Endothelial cell of umbilical vein (primary cell): ENCODE measurements at regions of chr1 and their contacts with region 1.

Region 1: GRCh38 chr1:67430352-67431155 is at the start of gene SERBP1:
- DNase-seq: peak; percentile 99
- H3K4me3 ChIP-seq: peak within 1 kb of the TSS; percentile 92 to 99 (median 93)
- H3K27ac ChIP-seq: peak within 1 kb of the TSS; percentile 75
- H3K4me1 ChIP-seq: peaks cover 27% of the 10 kb centered on the region
- H3K27me3 ChIP-seq: no peaks in the 10 kb centered on the region
- CTCF ChIP-seq: no peak
- POLR2A ChIP-seq: peak; percentile 16
- total RNA-seq, gene SERBP1: 290 and 293 TPM in 2 replicates

Region 2: DNA sequence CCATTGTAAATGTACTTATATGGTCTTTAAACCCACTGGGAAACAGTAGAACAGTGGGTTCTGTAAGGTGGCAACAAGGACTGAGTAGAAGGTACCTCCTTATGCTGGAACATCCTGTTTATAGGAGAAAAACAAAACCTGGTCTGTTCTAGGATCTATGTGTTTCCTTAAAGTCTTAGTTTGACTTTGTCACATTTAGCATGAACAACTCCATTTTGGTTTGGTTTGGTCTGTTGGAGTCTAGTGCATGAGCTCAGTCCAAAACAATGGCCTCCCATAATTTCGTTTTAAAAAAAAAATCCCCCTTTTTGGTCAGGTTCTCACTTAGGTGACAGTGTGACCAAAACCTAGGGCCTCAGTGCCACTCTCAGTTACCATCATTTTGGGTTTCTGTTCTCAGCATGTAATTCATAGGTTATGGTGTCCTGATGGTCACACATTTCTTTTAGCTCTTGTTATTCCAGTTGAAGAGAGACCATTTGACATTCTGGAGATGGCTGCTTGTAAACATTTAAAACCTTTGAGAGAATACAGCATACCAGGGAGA is 189.3 kb before region 1 on chr1:
- CTCF ChIA-PET with region 1: no interaction called
- POLR2A ChIA-PET with region 1: no interaction called
- dilution Hi-C with region 1: no loop called
- intact Hi-C with region 1: no loop called
- DNase-seq: no peak
- H3K4me3 ChIP-seq: no peak overlapping the region
- H3K27ac ChIP-seq: no peak overlapping the region
- H3K4me1 ChIP-seq: no peaks in the 10 kb centered on the region
- H3K27me3 ChIP-seq: peaks cover 8 to 9% of the 10 kb centered on the region in 2 experiments
- CTCF ChIP-seq: no peak
- POLR2A ChIP-seq: no peak

Region 3: GRCh38 chr1:67347688-67348472 is 82.7 kb before region 1 on chr1:
- CTCF ChIA-PET with region 1: interaction called, 11 read pairs
- POLR2A ChIA-PET with region 1: no interaction called
- dilution Hi-C with region 1: no loop called
- intact Hi-C with region 1: loop called (anchors 1 kb)
- DNase-seq: peak; percentile 57
- H3K4me3 ChIP-seq: no peak overlapping the region
- H3K27ac ChIP-seq: no peak overlapping the region
- H3K4me1 ChIP-seq: no peaks in the 10 kb centered on the region
- H3K27me3 ChIP-seq: peaks cover 0 to 10% of the 10 kb centered on the region in 2 experiments
- CTCF ChIP-seq: peak; percentile 74 to 76
- POLR2A ChIP-seq: no peak

Region 4: GRCh38 chr1:67418839-67419586 is 11.5 kb before region 1 on chr1:
- CTCF ChIA-PET with region 1: interaction called, 4 read pairs
- POLR2A ChIA-PET with region 1: no interaction called
- dilution Hi-C with region 1: no loop called
- intact Hi-C with region 1: loop called (anchors 1 kb)
- DNase-seq: no peak
- H3K4me3 ChIP-seq: no peak overlapping the region
- H3K27ac ChIP-seq: no peak overlapping the region
- H3K4me1 ChIP-seq: peaks cover 7% of the 10 kb centered on the region
- H3K27me3 ChIP-seq: no peaks in the 10 kb centered on the region
- CTCF ChIP-seq: no peak
- POLR2A ChIP-seq: no peak

Region 5: GRCh38 chr1:67468066-67468718 is 37.6 kb after region 1 on chr1:
- CTCF ChIA-PET with region 1: interaction called, 5 read pairs
- POLR2A ChIA-PET with region 1: no interaction called
- dilution Hi-C with region 1: no loop called
- intact Hi-C with region 1: loop called (anchors 1 kb)
- DNase-seq: peak; percentile 84
- H3K4me3 ChIP-seq: no peak overlapping the region
- H3K27ac ChIP-seq: peak overlapping the region; percentile 66
- H3K4me1 ChIP-seq: peaks cover 41% of the 10 kb centered on the region
- H3K27me3 ChIP-seq: no peaks in the 10 kb centered on the region
- CTCF ChIP-seq: no peak
- POLR2A ChIP-seq: no peak

Region 6: DNA sequence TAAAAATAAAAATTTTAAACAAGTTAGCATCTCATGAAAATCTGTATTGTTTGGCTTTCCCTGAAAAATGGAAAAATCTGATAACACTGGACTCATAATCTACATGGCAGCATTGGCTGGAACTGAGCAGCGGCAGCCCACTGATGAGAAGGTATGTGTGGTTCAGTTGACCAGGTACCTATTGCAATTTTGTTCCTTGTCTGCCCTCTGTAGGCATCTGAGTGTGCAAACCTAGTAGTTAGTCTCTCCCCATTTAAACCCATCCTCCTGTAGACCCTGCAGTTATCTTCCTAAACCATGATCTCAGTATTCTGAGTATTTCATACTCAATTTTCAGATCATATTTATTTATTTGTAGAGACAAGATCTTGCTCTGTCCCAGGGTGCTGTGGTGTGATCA is 59.1 kb after region 1 on chr1:
- CTCF ChIA-PET with region 1: interaction called, 6 read pairs
- POLR2A ChIA-PET with region 1: no interaction called
- dilution Hi-C with region 1: no loop called
- intact Hi-C with region 1: loop called (anchors 1 kb)
- DNase-seq: peak; percentile 58
- H3K4me3 ChIP-seq: no peak overlapping the region
- H3K27ac ChIP-seq: no peak overlapping the region
- H3K4me1 ChIP-seq: no peaks in the 10 kb centered on the region
- H3K27me3 ChIP-seq: no peaks in the 10 kb centered on the region
- CTCF ChIP-seq: peak; percentile 24 to 44
- POLR2A ChIP-seq: no peak